GM12878 (cell line): ENCODE measurements at regions of chr3 and their contacts with region 1.

Region 1: DNA sequence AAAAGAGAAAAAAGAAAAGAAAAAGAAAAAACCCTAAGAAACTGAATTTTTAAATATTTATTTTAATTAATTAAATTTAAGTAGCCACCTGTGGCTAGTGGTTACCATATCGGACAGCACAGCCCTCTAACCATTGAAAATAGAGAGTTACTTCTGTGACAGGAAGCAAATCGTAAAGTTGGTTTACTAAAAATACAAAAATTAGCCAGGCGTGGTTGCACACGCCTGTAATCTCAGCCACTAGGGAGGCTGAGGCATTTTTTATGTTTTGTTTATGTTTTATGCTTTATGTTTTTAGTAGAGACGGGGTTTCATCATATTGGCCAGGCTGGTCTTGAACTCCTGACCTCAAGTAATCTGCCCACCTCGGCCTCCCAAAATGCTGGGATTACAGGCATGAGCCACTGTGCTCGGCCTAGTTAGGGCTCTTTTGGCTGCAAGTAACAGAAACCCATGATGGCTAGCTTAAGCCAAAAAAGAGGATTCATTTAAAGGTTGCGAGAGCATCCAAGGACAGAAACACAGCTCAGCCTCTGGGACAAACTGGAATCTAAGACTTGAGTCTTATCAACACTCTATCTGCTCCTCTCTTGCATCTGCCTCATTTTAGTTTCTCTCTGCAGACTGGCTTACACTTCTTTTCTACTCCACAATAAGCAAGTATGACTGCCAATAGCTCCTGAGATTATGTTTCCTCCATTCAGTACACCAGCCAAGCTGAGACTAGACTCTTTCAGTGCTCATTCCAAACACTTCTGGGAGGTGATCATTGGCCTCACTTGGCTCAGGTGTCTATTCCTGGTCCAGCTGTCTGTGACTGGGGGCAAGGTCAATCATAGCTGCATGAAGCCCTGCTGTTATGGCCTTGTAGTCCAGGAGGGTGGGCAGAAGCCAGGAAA is 6.8 kb upstream of the SKIL start:
- DNase-seq: no peak
- ATAC-seq: peak; percentile 65
- H3K4me3 ChIP-seq: peak overlapping the region; percentile 44; the same call in 1 of the 2 replicates
- H3K27ac ChIP-seq: no peak overlapping the region
- H3K4me1 ChIP-seq: peaks cover 54% of the 10 kb centered on the region
- H3K27me3 ChIP-seq: no peaks in the 10 kb centered on the region
- CTCF ChIP-seq: no peak
- EP300 ChIP-seq: no peak
- POLR2A ChIP-seq: no peak
- RAD21 ChIP-seq: no peak

Region 2: GRCh38 chr3:170211668-170212067 is 139.1 kb before region 1 on chr3:
- CTCF ChIA-PET with region 1: no interaction called
- POLR2A ChIA-PET with region 1: no interaction called
- RAD21 ChIA-PET with region 1: no interaction called
- SMC1A ChIA-PET with region 1: no interaction called
- in situ Hi-C with region 1: no loop called
- intact Hi-C with region 1: no loop called
- DNase-seq: no peak
- ATAC-seq: no peak
- H3K4me3 ChIP-seq: no peak overlapping the region
- H3K27ac ChIP-seq: no peak overlapping the region
- H3K4me1 ChIP-seq: no peaks in the 10 kb centered on the region
- H3K27me3 ChIP-seq: no peaks in the 10 kb centered on the region
- CTCF ChIP-seq: no peak
- EP300 ChIP-seq: no peak
- POLR2A ChIP-seq: no peak
- RAD21 ChIP-seq: no peak

Region 3: GRCh38 chr3:170330366-170330765 is 20.4 kb before region 1 on chr3:
- CTCF ChIA-PET with region 1: interaction called, 3 read pairs
- POLR2A ChIA-PET with region 1: no interaction called
- RAD21 ChIA-PET with region 1: no interaction called
- SMC1A ChIA-PET with region 1: interaction called, 11 read pairs
- in situ Hi-C with region 1: no loop called
- intact Hi-C with region 1: no loop called
- DNase-seq: no peak
- ATAC-seq: peak; percentile 44
- H3K4me3 ChIP-seq: no peak overlapping the region
- H3K27ac ChIP-seq: no peak overlapping the region
- H3K4me1 ChIP-seq: 0 out of 2 replicates have a peak, but pooled peaks cover 5% of the 10 kb centered on the region
- H3K27me3 ChIP-seq: no peaks in the 10 kb centered on the region
- CTCF ChIP-seq: no peak
- EP300 ChIP-seq: no peak
- POLR2A ChIP-seq: no peak
- RAD21 ChIP-seq: no peak